HCT116 (cell line): ENCODE measurements at regions of chr4 and their contacts with region 1.

Region 1: GRCh38 chr4:110959041-110959643 is 336.3 kb upstream of the PITX2 start:
- DNase-seq: no peak
- ATAC-seq: no peak; the same call in 1 of the 2 replicates
- H3K4me3 ChIP-seq: no peak overlapping the region
- H3K27ac ChIP-seq: no peak overlapping the region
- H3K4me1 ChIP-seq: no peaks in the 10 kb centered on the region
- H3K27me3 ChIP-seq: no peaks in the 10 kb centered on the region
- CTCF ChIP-seq: peak; percentile 35 to 68 (median 49); a peak in 5 of 6 replicates
- POLR2A ChIP-seq: no peak
- RAD21 ChIP-seq: peak; percentile 73

Region 2: GRCh38 chr4:110198435-110199416 is 760.4 kb before region 1 on chr4 and contains the start of gene ELOVL6:
- CTCF ChIA-PET with region 1: no interaction called
- POLR2A ChIA-PET with region 1: no interaction called
- RAD21 ChIA-PET with region 1: no interaction called
- intact Hi-C with region 1: no loop called
- DNase-seq: peak; percentile 61
- ATAC-seq: peak; percentile 54
- H3K4me3 ChIP-seq: peak within 1 kb of the TSS; percentile 72
- H3K27ac ChIP-seq: peak within 1 kb of the TSS; percentile 78
- H3K4me1 ChIP-seq: peaks cover 32 to 40% of the 10 kb centered on the region in 2 experiments
- H3K27me3 ChIP-seq: no peaks in the 10 kb centered on the region
- CTCF ChIP-seq: no peak
- POLR2A ChIP-seq: peak; percentile 70
- RAD21 ChIP-seq: no peak
- total RNA-seq, gene ELOVL6: 38.7 TPM

Region 3: DNA sequence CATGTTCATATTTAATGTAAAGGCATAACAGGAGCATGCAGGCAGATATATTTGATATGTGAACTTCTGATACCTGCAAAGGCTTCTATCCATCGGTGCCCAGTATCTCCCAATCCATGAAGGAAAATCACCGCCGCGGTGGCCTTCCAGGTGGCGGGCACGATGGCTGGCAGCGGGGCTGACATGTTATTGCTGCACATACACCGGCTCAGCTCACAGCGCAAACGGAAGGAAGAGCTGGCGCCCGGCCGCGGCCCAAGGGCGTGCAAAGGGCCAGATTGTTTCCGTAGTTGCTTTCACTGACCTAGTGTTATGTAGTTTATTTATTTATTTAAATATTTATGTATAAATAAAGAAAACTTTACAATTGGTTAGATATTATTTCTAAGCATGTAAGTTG is 13.5 kb before region 1 on chr4:
- CTCF ChIA-PET with region 1: interaction called, 4 read pairs
- POLR2A ChIA-PET with region 1: no interaction called
- RAD21 ChIA-PET with region 1: no interaction called
- intact Hi-C with region 1: loop called (anchors 1 kb)
- DNase-seq: no peak
- ATAC-seq: no peak
- H3K4me3 ChIP-seq: no peak overlapping the region
- H3K27ac ChIP-seq: no peak overlapping the region
- H3K4me1 ChIP-seq: no peaks in the 10 kb centered on the region
- H3K27me3 ChIP-seq: no peaks in the 10 kb centered on the region
- CTCF ChIP-seq: no peak
- POLR2A ChIP-seq: no peak
- RAD21 ChIP-seq: no peak